Ascending aorta (tissue), 2 donors: ENCODE measurements at regions of chr6 and their contacts with region 1.

Region 1: GRCh38 chr6:154805288-154805911 is 72.2 kb downstream of the SCAF8 start:
- DNase-seq: no peak
- H3K4me3 ChIP-seq: no peak overlapping the region
- H3K27ac ChIP-seq: peak overlapping the region in 1 of 2 donors; percentile 69
- H3K4me1 ChIP-seq: no peaks in the 10 kb centered on the region
- H3K27me3 ChIP-seq: no peaks in the 10 kb centered on the region
- CTCF ChIP-seq: peak in 2 of 3 experiments; percentile 33 to 63

Region 2: GRCh38 chr6:154276810-154277628 is 528.4 kb before region 1 on chr6:
- intact Hi-C with region 1: loop called (anchors 5 kb)
- DNase-seq: no peak
- H3K4me3 ChIP-seq: peak overlapping the region in 1 of 2 donors; percentile 44
- H3K27ac ChIP-seq: no peak overlapping the region
- H3K4me1 ChIP-seq: peaks cover 0 to 2% of the 10 kb centered on the region in 2 donors
- H3K27me3 ChIP-seq: no peaks in the 10 kb centered on the region
- CTCF ChIP-seq: peak; percentile 33 to 65 (median 43)

Region 3: GRCh38 chr6:154675602-154676088 is 129.8 kb before region 1 on chr6:
- intact Hi-C with region 1: loop called (anchors 1 kb)
- DNase-seq: peak; percentile 68 to 95
- H3K4me3 ChIP-seq: no peak overlapping the region
- H3K27ac ChIP-seq: no peak overlapping the region
- H3K4me1 ChIP-seq: no peaks in the 10 kb centered on the region
- H3K27me3 ChIP-seq: no peaks in the 10 kb centered on the region
- CTCF ChIP-seq: peak; percentile 97 to 99 (median 97)

Region 4: GRCh38 chr6:154733012-154733625 is 72.3 kb before region 1 on chr6 and contains the start of gene SCAF8:
- intact Hi-C with region 1: loop called (anchors 1 kb)
- DNase-seq: peak; percentile 13 to 88
- H3K4me3 ChIP-seq: peak within 1 kb of the TSS; percentile 85 to 97
- H3K27ac ChIP-seq: peak within 1 kb of the TSS; percentile 100
- H3K4me1 ChIP-seq: peaks cover 2 to 39% of the 10 kb centered on the region in 2 donors
- H3K27me3 ChIP-seq: no peaks in the 10 kb centered on the region
- CTCF ChIP-seq: peak; percentile 70 to 89 (median 71)
- total RNA-seq, gene SCAF8: 22.6 TPM

Region 5: GRCh38 chr6:154791556-154792317 is 13.7 kb before region 1 on chr6:
- intact Hi-C with region 1: no loop called
- DNase-seq: no peak
- H3K4me3 ChIP-seq: no peak overlapping the region
- H3K27ac ChIP-seq: no peak overlapping the region
- H3K4me1 ChIP-seq: no peaks in the 10 kb centered on the region
- H3K27me3 ChIP-seq: no peaks in the 10 kb centered on the region
- CTCF ChIP-seq: no peak